Ascending aorta (tissue), 2 donors: ENCODE measurements at regions of chr1 and their contacts with region 1.

Region 1: DNA sequence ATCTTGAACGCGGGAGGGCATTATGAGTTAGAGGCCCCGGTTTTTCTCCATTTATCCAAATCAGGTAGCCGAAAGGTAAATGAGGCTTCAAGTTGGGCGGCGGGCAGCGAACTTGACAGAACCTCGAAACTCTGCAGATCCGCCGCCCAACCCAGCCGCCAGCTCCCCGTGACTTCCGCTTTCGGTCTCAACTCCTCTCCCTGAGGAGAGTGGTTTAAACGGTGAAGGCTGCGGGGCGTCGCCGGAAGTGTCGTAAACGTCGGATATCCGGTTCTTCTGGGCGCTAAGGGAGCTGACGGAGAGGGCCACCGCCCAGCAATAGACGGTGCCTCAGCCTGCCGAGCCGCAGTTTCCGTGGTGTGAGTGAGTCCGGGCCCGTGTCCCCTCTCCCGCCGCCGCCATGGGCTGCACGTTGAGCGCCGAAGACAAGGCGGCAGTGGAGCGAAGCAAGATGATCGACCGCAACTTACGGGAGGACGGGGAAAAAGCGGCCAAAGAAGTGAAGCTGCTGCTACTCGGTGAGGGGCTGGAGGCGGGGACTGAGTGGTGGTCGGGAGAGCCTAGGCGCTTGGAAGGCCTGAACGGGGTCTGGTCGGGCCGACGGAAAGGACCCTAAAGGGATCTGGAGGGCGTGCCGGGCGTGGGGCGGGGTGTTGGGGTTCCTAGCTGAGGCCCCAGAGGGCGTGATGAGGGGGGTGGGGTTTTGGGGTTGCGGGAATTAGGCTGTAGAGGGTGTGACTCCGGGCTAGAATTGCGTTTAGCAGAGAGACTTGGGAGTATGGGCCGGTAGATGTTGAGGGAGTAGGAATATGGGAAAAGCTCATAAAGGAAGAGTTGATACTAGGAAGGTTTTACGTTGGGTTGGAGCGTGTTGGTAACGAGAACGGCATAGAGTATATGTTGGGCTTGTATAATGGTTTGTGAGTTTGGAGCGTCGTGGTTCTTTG is at the start of gene GNAI3:
- DNase-seq: peak; percentile 91 to 99
- H3K4me3 ChIP-seq: peak within 1 kb of the TSS; percentile 83 to 92
- H3K27ac ChIP-seq: peak within 1 kb of the TSS; percentile 94 to 95
- H3K4me1 ChIP-seq: peaks cover 0 to 23% of the 10 kb centered on the region in 2 donors
- H3K27me3 ChIP-seq: no peaks in the 10 kb centered on the region
- CTCF ChIP-seq: no peak
- total RNA-seq, gene GNAI3: 2.8 TPM

Region 2: GRCh38 chr1:109620841-109621286 is 72.3 kb after region 1 on chr1:
- intact Hi-C with region 1: loop called (anchors 1 kb)
- DNase-seq: peak; percentile 93 to 99
- H3K4me3 ChIP-seq: peak overlapping the region; percentile 50 to 85
- H3K27ac ChIP-seq: peak overlapping the region; percentile 84 to 89
- H3K4me1 ChIP-seq: peaks cover 15 to 34% of the 10 kb centered on the region in 2 donors
- H3K27me3 ChIP-seq: no peaks in the 10 kb centered on the region
- CTCF ChIP-seq: no peak

Region 3: DNA sequence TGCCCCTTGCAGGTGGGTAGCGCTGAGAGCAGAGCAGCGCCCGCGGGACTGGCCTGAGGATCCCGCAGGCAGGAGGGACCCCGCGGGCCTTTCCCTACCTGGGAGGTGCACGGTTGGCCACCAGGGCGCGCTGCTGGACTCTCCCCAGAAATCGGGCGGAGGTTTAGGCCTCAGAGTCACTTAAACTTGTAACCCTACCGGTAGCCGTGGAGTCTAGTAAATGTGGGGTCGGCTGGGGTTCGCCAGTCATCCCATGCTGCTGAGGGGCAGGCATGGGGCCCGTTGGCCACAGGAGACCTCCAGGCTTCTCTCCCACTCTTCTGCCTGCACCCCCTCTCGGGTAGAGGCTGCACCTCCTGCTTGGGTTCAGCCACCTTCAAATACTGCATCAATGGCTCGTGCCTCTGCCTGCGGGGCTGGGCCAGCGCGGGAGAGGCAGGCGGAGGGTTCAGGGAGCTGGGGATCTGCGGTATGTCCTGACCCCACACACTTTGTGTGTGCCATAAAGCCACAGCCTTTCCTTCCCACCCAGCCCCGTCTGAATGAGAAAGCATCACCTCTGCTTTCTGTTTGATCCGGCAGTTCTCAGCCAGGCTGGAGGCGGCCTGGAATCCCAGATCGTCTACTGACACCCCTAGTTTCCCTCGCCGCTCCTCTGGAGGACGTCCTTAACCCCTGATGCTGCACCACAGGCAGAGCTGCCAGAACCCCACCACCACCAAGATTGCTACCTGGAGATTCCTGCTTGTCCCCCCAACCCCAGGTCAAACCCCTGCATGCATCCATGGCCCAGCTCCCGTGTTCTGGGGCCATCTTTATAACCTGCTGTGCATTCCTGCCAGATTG is 95.0 kb after region 1 on chr1:
- intact Hi-C with region 1: loop called (anchors 5 kb)
- DNase-seq: peak in 1 of 2 donors; percentile 90
- H3K4me3 ChIP-seq: no peak overlapping the region
- H3K27ac ChIP-seq: no peak overlapping the region
- H3K4me1 ChIP-seq: no peaks in the 10 kb centered on the region
- H3K27me3 ChIP-seq: no peaks in the 10 kb centered on the region
- CTCF ChIP-seq: peak; percentile 81 to 87 (median 81)

Region 4: DNA sequence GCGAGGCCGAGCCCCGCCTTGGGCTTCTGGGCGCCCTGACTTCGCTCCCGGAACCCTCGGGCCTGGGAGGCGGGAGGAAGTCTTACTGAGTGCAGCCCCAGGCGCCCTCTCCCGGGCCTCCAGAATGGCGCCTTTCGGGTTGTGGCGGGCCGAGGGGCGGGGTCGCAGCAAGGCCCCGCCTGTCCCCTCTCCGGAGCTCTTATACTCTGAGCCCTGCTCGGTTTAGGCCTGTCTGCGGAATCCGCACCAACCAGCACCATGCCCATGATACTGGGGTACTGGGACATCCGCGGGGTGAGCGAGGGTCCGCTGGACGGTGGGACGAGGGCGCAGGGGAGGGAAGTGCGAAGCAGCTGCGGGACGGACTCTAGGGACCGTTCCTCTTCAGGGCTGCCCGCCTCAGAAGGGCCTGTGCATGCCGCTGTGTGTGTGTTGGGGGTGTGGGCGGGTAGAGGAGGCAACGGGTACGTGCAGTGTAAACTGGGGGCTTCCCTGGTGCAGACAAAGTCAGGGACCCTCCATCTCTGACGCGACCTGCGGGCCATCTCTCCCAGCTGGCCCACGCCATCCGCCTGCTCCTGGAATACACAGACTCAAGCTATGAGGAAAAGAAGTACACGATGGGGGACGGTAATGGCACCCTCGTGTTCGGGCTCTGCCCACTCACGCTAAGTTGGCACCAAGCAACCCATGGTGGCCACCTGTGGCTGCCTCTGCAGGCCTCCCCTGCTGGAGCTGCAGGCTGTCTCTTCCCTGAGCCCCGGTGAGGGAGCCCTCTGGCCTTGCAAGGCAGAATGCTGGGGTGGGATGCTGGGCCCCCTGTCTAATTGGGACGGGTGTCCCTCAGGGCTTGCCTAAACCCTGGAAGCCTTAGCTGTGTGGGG is 139.3 kb after region 1 on chr1 and contains the start of gene GSTM1:
- intact Hi-C with region 1: loop called (anchors 1 kb)
- DNase-seq: peak in 1 of 2 donors; percentile 89
- H3K4me3 ChIP-seq: peak within 1 kb of the TSS in 1 of 2 donors; percentile 38
- H3K27ac ChIP-seq: peak within 1 kb of the TSS in 1 of 2 donors; percentile 46
- H3K4me1 ChIP-seq: no peaks in the 10 kb centered on the region
- H3K27me3 ChIP-seq: no peaks in the 10 kb centered on the region
- CTCF ChIP-seq: peak in 1 of 3 experiments; percentile 41
- total RNA-seq, gene GSTM1: 89.4 TPM